ENCODE measurements at regions of chr13 and their contacts with region 1.

Region 1: GRCh38 chr13:65638572-65639168 is 1591.5 kb downstream of the PCDH9 start:
- DNase-seq: no peak
- ATAC-seq: peak; percentile 88
- H3K4me3 Mint-ChIP-seq: no peak overlapping the region
- H3K27ac Mint-ChIP-seq: no peak overlapping the region
- H3K4me1 Mint-ChIP-seq: no peaks in the 10 kb centered on the region
- H3K27me3 Mint-ChIP-seq: no peaks in the 10 kb centered on the region
- CTCF ChIP-seq: peak; percentile 53

Region 2: DNA sequence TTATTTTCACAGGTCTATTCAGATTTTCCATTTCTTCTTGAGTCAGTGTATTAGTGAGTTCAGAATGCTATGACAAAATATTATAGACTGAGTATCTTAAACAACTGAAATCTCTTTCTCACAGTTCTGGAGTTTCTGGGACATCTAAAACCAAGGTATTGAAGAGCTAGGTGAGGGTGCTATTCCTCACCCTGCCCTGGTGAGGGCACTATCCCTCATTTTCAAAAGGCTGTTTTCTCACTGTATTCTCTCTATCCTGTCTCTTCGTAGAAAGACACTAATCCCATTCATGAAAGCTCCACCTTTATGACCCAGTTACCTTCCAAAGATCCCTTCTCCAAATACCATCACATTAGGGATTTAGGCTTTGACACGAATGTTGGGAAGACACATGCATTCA is 25.7 kb before region 1 on chr13:
- CTCF ChIA-PET with region 1: interaction called, 12 read pairs
- POLR2A ChIA-PET with region 1: no interaction called
- DNase-seq: peak; percentile 11
- ATAC-seq: peak; percentile 93
- H3K4me3 Mint-ChIP-seq: no peak overlapping the region
- H3K27ac Mint-ChIP-seq: no peak overlapping the region
- H3K4me1 Mint-ChIP-seq: no peaks in the 10 kb centered on the region; the same call in 1 of the 2 replicates
- H3K27me3 Mint-ChIP-seq: peaks cover 2% of the 10 kb centered on the region; the same call in 1 of the 2 replicates
- CTCF ChIP-seq: peak; percentile 30; the same call in 1 of the 2 replicates

Region 3: GRCh38 chr13:65844266-65844841 is 205.7 kb after region 1 on chr13:
- CTCF ChIA-PET with region 1: no interaction called
- POLR2A ChIA-PET with region 1: no interaction called
- DNase-seq: no peak
- ATAC-seq: no peak
- H3K4me3 Mint-ChIP-seq: no peak overlapping the region
- H3K27ac Mint-ChIP-seq: no peak overlapping the region
- H3K4me1 Mint-ChIP-seq: no peaks in the 10 kb centered on the region
- H3K27me3 Mint-ChIP-seq: no peaks in the 10 kb centered on the region
- CTCF ChIP-seq: no peak